Ascending aorta (tissue), 2 donors: ENCODE measurements at regions of chr18 and their contacts with region 1.

Region 1: DNA sequence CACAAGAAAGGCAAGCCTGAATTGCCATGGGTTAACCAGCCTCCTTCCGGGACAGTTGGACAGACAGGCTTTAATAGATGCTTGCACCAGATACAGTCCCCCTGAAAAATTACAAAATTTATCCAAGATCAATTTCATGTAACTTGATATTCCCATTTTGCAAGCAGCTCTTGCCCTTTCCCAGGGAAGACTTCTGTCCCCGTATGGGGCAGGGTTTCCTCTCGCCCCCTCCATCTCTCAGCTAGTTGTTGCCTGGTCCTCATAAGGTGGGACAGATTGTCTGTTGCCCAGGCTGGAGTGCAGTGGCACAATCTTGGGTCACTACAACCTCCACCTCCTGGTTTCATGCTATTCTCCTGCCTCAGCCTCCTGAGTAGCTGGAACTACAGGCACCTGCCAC is 61.2 kb downstream of the TTC39C start:
- DNase-seq: no peak
- H3K4me3 ChIP-seq: no peak overlapping the region
- H3K27ac ChIP-seq: peak overlapping the region in 1 of 2 donors; percentile 38
- H3K4me1 ChIP-seq: no peaks in the 10 kb centered on the region
- H3K27me3 ChIP-seq: no peaks in the 10 kb centered on the region
- CTCF ChIP-seq: no peak

Region 2: DNA sequence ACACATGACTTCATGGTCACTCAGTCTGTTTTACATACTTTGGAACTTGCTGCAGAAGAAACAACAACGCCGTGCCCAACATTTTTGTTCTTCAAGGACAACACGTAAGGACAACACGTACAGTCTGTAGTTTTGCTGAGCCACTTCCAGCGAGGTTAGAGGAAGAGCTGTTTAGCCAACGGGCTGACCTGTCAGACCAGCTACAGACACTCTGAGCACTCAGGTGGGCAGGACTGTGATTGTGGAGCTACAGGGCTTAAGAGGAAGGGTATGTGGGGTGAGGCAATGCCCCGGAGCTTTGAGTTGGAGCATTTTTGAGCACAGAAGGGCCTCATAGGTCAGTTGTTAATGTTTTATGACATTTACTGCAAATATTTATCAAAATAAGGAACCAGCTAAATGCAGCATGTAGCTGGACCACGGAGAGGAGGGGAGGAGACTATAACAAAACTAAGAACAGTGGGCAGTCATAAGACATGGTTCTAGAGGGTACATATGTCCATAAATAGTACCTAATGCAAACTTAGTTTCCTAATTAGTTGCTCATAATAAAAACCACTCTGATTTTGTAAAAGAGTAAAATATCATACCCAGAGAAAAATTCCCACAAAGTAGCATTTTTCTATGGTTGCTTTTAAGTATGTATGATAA is 463.2 kb before region 1 on chr18:
- intact Hi-C with region 1: loop called (anchors 5 kb)
- DNase-seq: no peak
- H3K4me3 ChIP-seq: no peak overlapping the region
- H3K27ac ChIP-seq: no peak overlapping the region
- H3K4me1 ChIP-seq: no peaks in the 10 kb centered on the region
- H3K27me3 ChIP-seq: no peaks in the 10 kb centered on the region
- CTCF ChIP-seq: no peak

Region 3: GRCh38 chr18:24014062-24014985 is 61.4 kb before region 1 on chr18 and contains the start of gene TTC39C:
- intact Hi-C with region 1: loop called (anchors 5 kb)
- DNase-seq: peak in 1 of 2 donors; percentile 86
- H3K4me3 ChIP-seq: peak within 1 kb of the TSS; percentile 91 to 96
- H3K27ac ChIP-seq: peak within 1 kb of the TSS; percentile 76 to 85
- H3K4me1 ChIP-seq: peaks cover 4 to 8% of the 10 kb centered on the region in 2 donors
- H3K27me3 ChIP-seq: no peaks in the 10 kb centered on the region
- CTCF ChIP-seq: no peak
- total RNA-seq, gene TTC39C: 18.2 TPM